Activated CD8-positive, alpha-beta T cell treated with anti-CD3 and anti-CD28 coated beads, Interleukin-2, amount 10 ng/mL, durations not matched to agents 7 days and 5 days (primary cell): ENCODE measurements at regions of chr17 and their contacts with region 1.

Region 1: DNA sequence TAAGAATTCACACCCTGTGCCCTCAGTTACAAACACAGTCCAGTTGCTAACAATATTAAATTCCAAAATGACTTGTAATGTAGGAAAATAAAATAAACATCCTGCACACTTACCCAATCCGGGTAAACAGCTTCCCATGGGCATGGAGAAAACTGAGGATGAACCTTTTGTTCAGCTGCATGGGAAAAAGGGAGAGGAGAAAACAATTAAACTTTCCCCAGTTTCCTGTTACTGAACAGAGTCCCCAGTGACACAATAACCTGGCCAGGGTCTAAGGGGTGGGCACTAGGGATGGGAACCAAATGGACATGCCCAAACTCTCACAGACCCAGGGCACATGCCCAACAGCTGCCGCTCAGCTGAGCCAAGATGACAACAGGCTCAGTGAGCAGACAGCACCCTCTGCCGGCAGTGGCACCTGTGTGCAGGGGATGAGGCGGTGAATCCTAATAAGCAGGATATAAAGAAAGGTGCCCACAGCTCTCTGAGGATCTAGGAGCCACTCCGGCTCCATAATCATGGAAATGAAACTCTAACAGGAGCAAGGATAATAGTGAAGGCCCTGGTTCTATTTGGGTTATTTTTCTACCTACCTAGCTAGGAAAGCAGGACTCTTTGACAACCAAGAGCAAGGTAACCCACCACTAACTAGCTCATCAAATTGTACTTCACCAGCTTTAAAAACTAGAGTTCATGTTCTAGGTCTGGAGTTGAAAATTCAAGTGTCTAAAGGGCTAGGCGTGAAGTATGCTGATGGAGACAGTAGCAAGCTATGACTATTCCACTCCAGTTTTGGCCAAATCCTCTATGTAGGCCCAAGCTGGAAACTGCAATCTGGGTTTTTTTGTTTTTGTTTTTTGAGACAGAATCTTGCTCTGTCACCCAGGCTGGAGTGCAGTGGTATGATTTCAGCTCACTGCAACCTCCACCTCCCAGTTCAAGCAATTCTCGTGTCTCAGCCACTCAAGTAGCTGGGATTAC is 58.8 kb downstream of the SMG6 start:
- DNase-seq: peak; percentile 88
- ATAC-seq: peak; percentile 93
- H3K4me3 Mint-ChIP-seq: no peak overlapping the region
- H3K27ac Mint-ChIP-seq: peak overlapping the region; percentile 72
- H3K4me1 Mint-ChIP-seq: peaks cover 86% of the 10 kb centered on the region
- H3K27me3 Mint-ChIP-seq: no peaks in the 10 kb centered on the region

Region 2: DNA sequence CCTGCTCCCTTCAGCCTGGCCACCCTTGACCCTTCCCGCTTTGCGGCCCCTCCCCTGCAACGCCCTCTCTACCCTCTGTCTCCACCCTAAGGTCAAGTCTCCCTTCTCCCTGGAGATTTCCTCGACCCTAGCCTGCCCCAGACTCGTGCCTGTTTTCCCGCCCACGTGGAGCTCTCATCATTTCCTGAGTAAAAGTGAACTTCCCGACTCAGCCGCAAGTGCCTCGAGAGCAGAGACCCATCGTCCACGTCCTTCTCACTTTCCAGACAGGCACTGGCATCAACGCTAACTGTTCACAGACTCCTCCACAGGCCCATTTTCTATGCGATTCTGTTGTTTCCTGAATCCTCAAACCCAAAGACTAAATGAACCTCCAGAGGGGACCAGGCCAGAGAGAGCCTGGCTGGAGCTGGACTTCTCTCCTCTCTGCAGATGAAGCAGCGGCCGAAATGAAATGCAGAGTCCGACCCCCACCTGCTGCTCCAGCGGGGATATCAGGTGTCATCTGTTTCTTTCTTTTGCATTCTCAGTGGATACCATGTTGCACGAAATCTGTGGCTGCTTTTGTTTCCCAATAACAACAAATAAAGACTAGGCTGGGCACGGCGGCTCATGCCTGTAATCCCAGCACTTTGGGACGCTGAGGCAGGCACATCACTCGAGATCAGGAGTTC is 272.2 kb before region 1 on chr17:
- CTCF ChIA-PET with region 1: no interaction called
- POLR2A ChIA-PET with region 1: no interaction called
- DNase-seq: no peak
- ATAC-seq: no peak
- H3K4me3 Mint-ChIP-seq: no peak overlapping the region
- H3K27ac Mint-ChIP-seq: no peak overlapping the region
- H3K4me1 Mint-ChIP-seq: peaks cover 35% of the 10 kb centered on the region
- H3K27me3 Mint-ChIP-seq: peaks cover 4% of the 10 kb centered on the region

Region 3: DNA sequence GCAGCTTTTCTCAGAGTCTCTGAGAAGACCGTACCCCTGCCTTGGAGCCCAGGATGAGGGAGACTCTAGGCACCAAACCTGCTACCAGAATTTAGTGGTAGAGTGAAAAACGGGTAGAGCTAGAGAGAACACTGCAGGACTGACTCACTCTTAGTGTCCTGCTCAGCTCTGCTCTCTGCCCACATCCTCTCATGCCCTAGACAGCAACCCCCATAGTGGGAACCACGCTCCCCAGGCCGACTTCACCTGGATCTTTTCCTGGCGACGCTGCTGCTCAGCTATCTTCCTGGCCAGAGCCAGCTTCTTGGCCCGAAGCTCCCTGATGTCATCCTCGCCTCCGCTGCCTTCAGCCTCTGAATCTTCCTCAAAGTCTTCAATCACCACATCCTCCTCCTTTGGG is 163.3 kb before region 1 on chr17:
- CTCF ChIA-PET with region 1: interaction called, 68 read pairs
- POLR2A ChIA-PET with region 1: no interaction called
- DNase-seq: no peak
- ATAC-seq: peak; percentile 62
- H3K4me3 Mint-ChIP-seq: no peak overlapping the region
- H3K27ac Mint-ChIP-seq: peak overlapping the region; percentile 66
- H3K4me1 Mint-ChIP-seq: peaks cover 54% of the 10 kb centered on the region
- H3K27me3 Mint-ChIP-seq: no peaks in the 10 kb centered on the region

Region 4: DNA sequence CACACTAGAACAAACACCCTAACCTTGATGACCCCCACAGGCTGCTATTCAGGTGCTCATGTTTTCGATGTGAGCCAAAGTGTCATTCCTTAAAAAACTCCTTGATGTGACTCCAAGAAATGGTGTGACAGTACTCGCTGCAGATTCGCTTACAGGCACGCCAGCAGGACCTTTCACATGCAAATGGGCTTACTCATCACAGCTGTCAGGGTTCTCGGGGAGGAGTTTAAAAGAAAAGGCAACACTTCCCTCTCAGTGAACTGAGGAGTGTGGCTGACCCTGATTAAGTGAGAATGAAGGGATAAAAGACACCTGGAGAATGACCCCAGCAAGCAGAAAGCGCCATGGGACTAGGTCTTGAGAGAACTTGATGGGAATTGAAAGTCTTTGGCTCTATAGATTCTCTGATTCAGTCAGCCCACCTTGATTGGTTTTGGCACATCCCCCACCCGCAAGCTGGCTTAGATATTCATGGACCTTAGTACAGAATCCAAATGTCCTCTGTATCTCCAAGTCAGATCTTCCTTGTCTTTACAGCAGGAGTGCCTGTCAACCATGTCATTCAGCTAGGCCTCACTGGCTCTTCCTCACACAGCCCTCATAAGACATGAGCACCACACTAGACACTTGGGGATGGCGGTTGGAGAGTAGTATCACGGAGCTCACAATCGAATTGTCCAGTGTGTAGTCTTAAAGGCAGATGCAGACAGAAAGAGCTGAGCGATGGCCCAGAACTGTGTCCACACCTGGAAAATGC is 107.3 kb before region 1 on chr17:
- CTCF ChIA-PET with region 1: interaction called, 18 read pairs
- POLR2A ChIA-PET with region 1: no interaction called
- DNase-seq: no peak
- ATAC-seq: no peak
- H3K4me3 Mint-ChIP-seq: no peak overlapping the region
- H3K27ac Mint-ChIP-seq: peak overlapping the region; percentile 56
- H3K4me1 Mint-ChIP-seq: peaks cover 23% of the 10 kb centered on the region
- H3K27me3 Mint-ChIP-seq: no peaks in the 10 kb centered on the region

Region 5: DNA sequence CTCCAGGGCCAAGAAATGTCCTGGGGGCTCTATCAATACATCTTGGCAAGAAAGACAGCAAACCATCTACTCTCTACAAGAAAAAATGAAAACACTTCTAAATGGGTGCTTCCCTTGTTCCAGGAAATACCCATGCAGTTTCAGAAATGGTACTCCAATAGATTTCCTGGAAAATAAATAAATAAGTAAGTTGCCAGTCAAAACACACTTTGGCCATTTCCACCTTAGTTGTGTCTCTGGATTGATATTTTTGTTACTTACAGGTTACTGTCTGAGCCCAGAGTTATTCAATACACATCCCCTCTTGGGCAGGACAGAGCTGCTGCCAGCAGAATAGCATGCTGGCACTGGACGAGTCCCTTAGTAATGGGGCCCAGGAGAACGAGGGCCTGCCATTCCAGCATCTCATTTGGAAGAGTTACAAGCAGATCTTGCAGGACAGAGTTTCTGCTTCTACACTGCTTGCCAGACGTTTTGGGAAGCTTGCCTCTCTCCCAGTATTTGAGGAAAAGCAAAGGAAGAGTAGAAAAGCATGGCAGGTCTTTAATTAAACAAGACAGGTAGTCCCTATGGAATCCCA is 41.7 kb before region 1 on chr17:
- CTCF ChIA-PET with region 1: interaction called, 17 read pairs
- POLR2A ChIA-PET with region 1: no interaction called
- DNase-seq: no peak
- ATAC-seq: peak; percentile 67
- H3K4me3 Mint-ChIP-seq: peak overlapping the region; percentile 66
- H3K27ac Mint-ChIP-seq: peak overlapping the region; percentile 88
- H3K4me1 Mint-ChIP-seq: peaks cover 45% of the 10 kb centered on the region
- H3K27me3 Mint-ChIP-seq: no peaks in the 10 kb centered on the region

Region 6: GRCh38 chr17:2259769-2260536 is 15.1 kb after region 1 on chr17:
- CTCF ChIA-PET with region 1: interaction called, 145 read pairs
- POLR2A ChIA-PET with region 1: interaction called, 16 read pairs
- DNase-seq: peak; percentile 88
- ATAC-seq: peak; percentile 77
- H3K4me3 Mint-ChIP-seq: peak overlapping the region; percentile 74
- H3K27ac Mint-ChIP-seq: peak overlapping the region; percentile 92
- H3K4me1 Mint-ChIP-seq: peaks cover 81% of the 10 kb centered on the region
- H3K27me3 Mint-ChIP-seq: no peaks in the 10 kb centered on the region

Region 7: GRCh38 chr17:2421315-2422147 is 176.7 kb after region 1 on chr17:
- CTCF ChIA-PET with region 1: no interaction called
- POLR2A ChIA-PET with region 1: no interaction called
- DNase-seq: no peak
- ATAC-seq: no peak
- H3K4me3 Mint-ChIP-seq: no peak overlapping the region
- H3K27ac Mint-ChIP-seq: no peak overlapping the region
- H3K4me1 Mint-ChIP-seq: peaks cover 2% of the 10 kb centered on the region
- H3K27me3 Mint-ChIP-seq: no peaks in the 10 kb centered on the region